ENCODE measurements at regions of chr18 and their contacts with region 1.

Region 1: DNA sequence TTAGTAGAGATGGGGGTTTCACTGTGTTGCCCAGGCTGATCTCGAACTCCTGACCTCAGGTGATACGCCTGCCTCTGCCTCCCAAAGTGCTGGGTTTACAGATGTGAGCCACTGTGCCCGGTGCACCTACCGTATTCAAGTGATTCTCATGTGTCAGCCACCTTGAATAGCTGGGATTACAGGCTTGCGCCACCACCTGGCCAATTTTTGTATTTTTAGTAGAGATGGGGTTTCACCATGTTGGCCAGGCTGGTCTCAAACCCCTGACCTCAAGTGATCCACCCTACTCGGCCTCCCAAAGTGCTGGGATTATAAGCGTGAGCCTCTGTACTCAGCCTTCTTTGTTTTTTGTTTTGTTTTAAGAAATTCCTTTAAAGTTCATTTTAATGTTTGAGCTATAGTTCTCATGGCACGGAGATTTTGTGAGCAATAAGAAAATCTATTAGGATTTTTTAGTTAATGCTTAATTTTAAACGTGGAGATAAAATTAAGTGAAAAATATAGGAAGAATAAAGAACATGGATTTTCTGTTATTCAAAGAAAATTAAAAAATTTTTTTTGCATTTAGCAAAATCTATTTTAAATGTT is 242.6 kb downstream of the PHLPP1 start:
- DNase-seq: peak; percentile 62
- H3K4me3 Mint-ChIP-seq: no peak overlapping the region
- H3K27ac Mint-ChIP-seq: no peak overlapping the region
- H3K4me1 Mint-ChIP-seq: peaks cover 14% of the 10 kb centered on the region
- H3K27me3 Mint-ChIP-seq: no peaks in the 10 kb centered on the region

Region 2: GRCh38 chr18:62637807-62638687 is 319.9 kb before region 1 on chr18:
- CTCF ChIA-PET with region 1: interaction called, 10 read pairs
- POLR2A ChIA-PET with region 1: no interaction called
- DNase-seq: peak; percentile 63
- H3K4me3 Mint-ChIP-seq: no peak overlapping the region
- H3K27ac Mint-ChIP-seq: peak overlapping the region; percentile 38
- H3K4me1 Mint-ChIP-seq: peaks cover 27% of the 10 kb centered on the region
- H3K27me3 Mint-ChIP-seq: peaks cover 17% of the 10 kb centered on the region

Region 3: GRCh38 chr18:62714671-62715435 is 243.1 kb before region 1 on chr18:
- CTCF ChIA-PET with region 1: interaction called, 55 read pairs
- POLR2A ChIA-PET with region 1: interaction called, 4 read pairs
- DNase-seq: peak; percentile 91
- H3K4me3 Mint-ChIP-seq: peak overlapping the region; percentile 86
- H3K27ac Mint-ChIP-seq: peak overlapping the region; percentile 80
- H3K4me1 Mint-ChIP-seq: peaks cover 34% of the 10 kb centered on the region
- H3K27me3 Mint-ChIP-seq: peaks cover 20% of the 10 kb centered on the region

Measured in activated CD4-positive, alpha-beta memory T cell treated with anti-CD3 and anti-CD28 coated beads, Interleukin-2, amount 10 ng/mL, durations not matched to agents 7 days and 5 days (primary cell).